ENCODE measurements at regions of chr1 and their contacts with region 1.

Region 1: DNA sequence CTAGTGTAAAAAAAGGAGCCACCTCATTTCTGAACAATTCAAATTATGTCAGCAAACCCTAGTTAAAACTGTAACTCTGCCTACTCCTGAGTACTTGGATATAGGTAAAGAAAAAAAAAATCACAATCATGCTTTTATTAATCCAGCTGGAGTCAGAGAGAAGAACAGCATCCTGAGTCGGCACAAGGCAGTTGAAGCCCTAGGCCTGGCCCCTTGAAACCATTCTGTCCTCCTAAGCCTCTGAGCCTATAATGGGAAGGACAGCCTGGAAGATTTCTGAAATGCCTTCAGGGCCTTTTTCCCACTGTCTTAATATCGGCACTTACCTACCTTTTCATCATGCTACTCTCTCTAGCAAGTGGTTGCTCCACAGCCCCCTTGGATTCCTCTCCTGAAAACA is 32.5 kb downstream of the CDC42BPA start:
- DNase-seq: no peak
- H3K4me3 ChIP-seq: no peak overlapping the region
- H3K27me3 ChIP-seq: no peaks in the 10 kb centered on the region
- CTCF ChIP-seq: no peak

Region 2: GRCh38 chr1:227308367-227309336 is 22.9 kb after region 1 on chr1:
- CTCF ChIA-PET with region 1: no interaction called
- POLR2A ChIA-PET with region 1: interaction called, 10 read pairs
- DNase-seq: no peak
- H3K4me3 ChIP-seq: no peak overlapping the region
- H3K27me3 ChIP-seq: no peaks in the 10 kb centered on the region
- CTCF ChIP-seq: no peak

Measured in BJ (cell line).